ENCODE measurements at regions of chr3 and their contacts with region 1.

Region 1: GRCh38 chr3:136250226-136250902 is at the start of gene PCCB:
- DNase-seq: peak; percentile 97
- ATAC-seq: peak; percentile 99
- total RNA-seq, gene PCCB: 104 TPM

Region 2: DNA sequence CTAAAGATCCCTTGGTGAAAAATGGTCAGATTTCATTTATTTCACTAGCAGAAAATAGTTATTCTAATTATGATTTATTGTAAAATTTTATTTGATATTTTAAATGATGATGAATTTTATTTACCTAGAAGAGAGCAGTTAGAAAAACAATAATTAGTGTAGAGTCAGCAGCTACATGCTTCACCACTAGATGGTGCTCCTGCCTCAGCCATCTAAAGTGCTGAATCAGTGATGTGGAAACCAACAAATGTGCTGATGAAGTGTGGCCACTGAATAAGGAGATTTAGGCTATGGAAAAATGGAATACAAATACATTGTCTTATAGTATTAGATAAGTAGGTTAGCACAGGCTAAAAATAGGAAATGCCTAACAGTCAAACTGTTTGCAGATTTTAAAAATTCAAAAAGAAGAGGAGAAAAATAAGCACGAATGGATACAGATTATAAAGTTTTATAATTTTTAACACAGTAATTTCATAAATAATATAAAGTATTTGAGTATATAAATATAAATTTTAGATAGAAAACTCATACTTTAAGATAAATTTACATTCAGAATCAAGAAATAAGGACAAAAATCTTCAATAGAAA is 175.1 kb before region 1 on chr3:
- intact Hi-C with region 1: loop called (anchors 2 kb)
- DNase-seq: peak; percentile 66
- ATAC-seq: peak; percentile 90

Region 3: GRCh38 chr3:136196401-136197158 is 53.8 kb before region 1 on chr3:
- intact Hi-C with region 1: loop called (anchors 2 kb)
- DNase-seq: peak; percentile 99
- ATAC-seq: peak; percentile 89

Measured in Right ventricle myocardium superior (tissue), 1 donor.